ENCODE measurements at regions of chr4 and their contacts with region 1.

Region 1: GRCh38 chr4:110516106-110516922 is 40.4 kb downstream of the ENPEP start:
- DNase-seq: no peak

Region 2: DNA sequence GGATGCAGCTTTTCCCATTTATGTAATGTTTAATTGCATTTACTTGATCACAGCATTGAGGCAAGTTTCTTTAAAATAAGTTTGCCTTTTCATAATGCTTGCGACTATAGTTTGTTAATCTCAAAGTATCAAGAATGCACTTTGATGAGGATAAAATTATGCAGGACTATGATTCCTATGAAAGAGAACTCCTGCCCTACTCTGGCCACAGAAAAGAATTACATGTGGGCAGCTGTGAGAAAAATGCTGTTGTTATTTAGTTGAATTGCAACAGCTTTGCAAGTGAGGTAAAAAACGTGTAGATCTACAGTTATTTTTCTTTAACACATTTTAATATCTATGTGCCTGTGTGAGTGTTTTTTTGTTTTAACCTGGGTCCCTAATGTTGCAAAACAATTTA is 1878.5 kb before region 1 on chr4:
- intact Hi-C with region 1: loop called in 1 of 2 experiments (anchors 5 kb)
- DNase-seq: no peak

Region 3: DNA sequence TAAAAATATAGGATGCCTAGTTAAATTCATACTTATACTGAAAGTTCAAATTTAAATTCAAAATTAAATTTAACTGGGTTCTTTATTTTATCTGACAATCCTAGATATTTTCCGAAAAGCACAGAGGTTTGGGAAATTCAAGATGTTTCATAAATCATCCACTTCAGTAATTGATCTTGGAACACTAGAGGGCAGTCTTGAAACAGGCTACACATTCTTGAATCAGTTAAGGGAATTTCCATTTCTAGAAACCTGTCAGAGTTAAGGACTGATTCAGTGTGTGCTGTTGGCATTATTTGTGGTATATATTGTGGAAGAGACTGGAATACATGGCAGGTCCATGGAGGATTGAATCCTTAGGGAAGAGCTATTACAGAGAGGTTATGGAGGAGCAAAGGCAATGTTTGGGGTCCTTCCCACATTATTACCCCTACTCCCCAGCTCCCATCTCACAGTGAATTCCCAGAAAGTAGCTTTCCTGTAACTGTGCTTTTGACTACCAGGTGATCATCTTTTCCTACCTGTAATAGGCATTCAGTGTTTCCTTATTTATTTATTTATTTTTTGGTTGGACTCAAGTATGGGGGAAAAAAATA is 510.8 kb before region 1 on chr4:
- intact Hi-C with region 1: loop called (anchors 5 kb)
- DNase-seq: no peak

Measured in posterior vena cava (tissue), 2 donors.